PC-3 (cell line): ENCODE measurements at regions of chr5 and their contacts with region 1.

Region 1: GRCh38 chr5:136174021-136174659 is 18.8 kb downstream of the SMIM32 start:
- DNase-seq: peak; percentile 50
- ATAC-seq: peak; percentile 79
- H3K4me3 ChIP-seq: no peak overlapping the region
- H3K27ac ChIP-seq: no peak overlapping the region
- H3K4me1 ChIP-seq: no peaks in the 10 kb centered on the region
- H3K27me3 ChIP-seq: no peaks in the 10 kb centered on the region
- CTCF ChIP-seq: peak; percentile 75

Region 2: GRCh38 chr5:135944967-135945560 is 229.1 kb before region 1 on chr5:
- CTCF ChIA-PET with region 1: no interaction called
- POLR2A ChIA-PET with region 1: no interaction called
- intact Hi-C with region 1: loop called (anchors 2 kb)
- DNase-seq: peak; percentile 80
- ATAC-seq: peak; percentile 46
- H3K4me3 ChIP-seq: no peak overlapping the region
- H3K27ac ChIP-seq: no peak overlapping the region
- H3K4me1 ChIP-seq: no peaks in the 10 kb centered on the region
- H3K27me3 ChIP-seq: no peaks in the 10 kb centered on the region
- CTCF ChIP-seq: peak; percentile 80

Region 3: GRCh38 chr5:138035605-138036537 is 1861.7 kb after region 1 on chr5:
- CTCF ChIA-PET with region 1: no interaction called
- POLR2A ChIA-PET with region 1: no interaction called
- intact Hi-C with region 1: no loop called
- DNase-seq: peak; percentile 80
- ATAC-seq: peak; percentile 59
- H3K4me3 ChIP-seq: no peak overlapping the region
- H3K27ac ChIP-seq: no peak overlapping the region
- H3K4me1 ChIP-seq: peaks cover 8% of the 10 kb centered on the region
- H3K27me3 ChIP-seq: no peaks in the 10 kb centered on the region
- CTCF ChIP-seq: peak; percentile 95